ENCODE measurements at regions of chr9 and their contacts with region 1.

Region 1: DNA sequence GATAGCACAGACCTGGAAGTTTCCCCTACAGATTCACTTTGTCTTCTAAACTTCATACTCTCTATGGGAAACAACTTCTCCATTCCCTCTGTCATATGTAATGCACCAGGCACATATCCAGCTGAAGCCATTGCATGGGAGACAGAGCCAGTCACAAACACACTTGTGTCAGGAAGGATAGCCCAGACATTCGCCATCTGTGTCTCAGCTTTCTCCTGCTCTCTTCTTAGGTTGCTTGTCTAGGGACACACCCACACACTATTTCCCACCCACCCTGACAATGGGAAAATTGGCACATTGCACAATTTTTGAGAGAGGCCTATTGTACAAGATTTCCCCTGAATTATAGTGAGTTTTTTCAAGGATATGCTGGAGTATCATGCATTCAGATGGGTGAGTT is 158.4 kb upstream of the MPDZ start:
- DNase-seq: no peak
- ATAC-seq: no peak
- H3K4me3 ChIP-seq: no peak overlapping the region
- H3K27ac ChIP-seq: no peak overlapping the region
- H3K4me1 ChIP-seq: no peaks in the 10 kb centered on the region
- CTCF ChIP-seq: no peak
- EP300 ChIP-seq: no peak
- POLR2A ChIP-seq: no peak
- RAD21 ChIP-seq: no peak

Region 2: DNA sequence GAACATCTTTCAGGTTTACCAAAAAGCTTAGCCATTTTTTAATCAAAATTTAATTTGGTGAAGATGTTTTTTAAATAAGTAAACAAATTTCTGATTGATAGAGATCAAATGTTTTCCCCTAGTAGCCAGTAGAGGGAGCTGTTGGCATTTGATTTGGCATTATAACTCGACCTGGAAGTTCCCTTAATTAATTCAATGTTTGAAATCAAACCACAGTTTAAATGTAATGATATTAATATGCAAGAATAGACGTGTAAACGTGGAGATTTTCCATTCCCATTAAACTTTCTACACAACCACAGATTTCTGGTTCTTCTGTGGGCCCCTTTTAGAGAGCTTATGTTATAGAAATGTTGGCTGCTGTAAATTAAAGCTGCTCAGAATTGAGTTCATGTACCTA is 10.3 kb before region 1 on chr9:
- CTCF ChIA-PET with region 1: interaction called, 15 read pairs
- POLR2A ChIA-PET with region 1: no interaction called
- DNase-seq: peak; percentile 6 to 48
- ATAC-seq: no peak
- H3K4me3 ChIP-seq: no peak overlapping the region
- H3K27ac ChIP-seq: no peak overlapping the region
- H3K4me1 ChIP-seq: no peaks in the 10 kb centered on the region
- CTCF ChIP-seq: peak; percentile 73
- EP300 ChIP-seq: no peak
- POLR2A ChIP-seq: no peak
- RAD21 ChIP-seq: peak; percentile 65 to 82